ENCODE measurements at regions of chr3 and their contacts with region 1.

Region 1: GRCh38 chr3:71583566-71584449 is at the start of gene FOXP1:
- DNase-seq: peak; percentile 60 to 64
- H3K4me3 ChIP-seq: peak within 1 kb of the TSS; percentile 77
- H3K4me3 Mint-ChIP-seq: peak within 1 kb of the TSS; percentile 91
- H3K27ac Mint-ChIP-seq: peak within 1 kb of the TSS; percentile 90
- H3K4me1 ChIP-seq: peaks cover 12% of the 10 kb centered on the region
- H3K4me1 Mint-ChIP-seq: peaks cover 18% of the 10 kb centered on the region
- H3K27me3 ChIP-seq: no peaks in the 10 kb centered on the region
- H3K27me3 Mint-ChIP-seq: no peaks in the 10 kb centered on the region
- CTCF ChIP-seq: no peak
- total RNA-seq, gene FOXP1: 131 and 155 TPM in 2 replicates

Region 2: GRCh38 chr3:70899816-70900215 is 684.0 kb before region 1 on chr3:
- CTCF ChIA-PET with region 1: no interaction called
- POLR2A ChIA-PET with region 1: no interaction called
- intact Hi-C with region 1: no loop called
- DNase-seq: no peak
- H3K4me3 ChIP-seq: no peak overlapping the region
- H3K4me3 Mint-ChIP-seq: no peak overlapping the region
- H3K27ac Mint-ChIP-seq: no peak overlapping the region
- H3K4me1 ChIP-seq: no peaks in the 10 kb centered on the region
- H3K4me1 Mint-ChIP-seq: no peaks in the 10 kb centered on the region
- H3K27me3 ChIP-seq: no peaks in the 10 kb centered on the region
- H3K27me3 Mint-ChIP-seq: peaks cover 8% of the 10 kb centered on the region
- CTCF ChIP-seq: no peak

Region 3: GRCh38 chr3:71006810-71007785 is 576.7 kb before region 1 on chr3:
- CTCF ChIA-PET with region 1: no interaction called
- POLR2A ChIA-PET with region 1: no interaction called
- intact Hi-C with region 1: loop called (anchors 5 kb)
- DNase-seq: peak in 1 of 2 experiments; percentile 13
- H3K4me3 ChIP-seq: no peak overlapping the region
- H3K4me3 Mint-ChIP-seq: no peak overlapping the region
- H3K27ac Mint-ChIP-seq: no peak overlapping the region
- H3K4me1 ChIP-seq: peaks cover 15% of the 10 kb centered on the region
- H3K4me1 Mint-ChIP-seq: peaks cover 6% of the 10 kb centered on the region
- H3K27me3 ChIP-seq: no peaks in the 10 kb centered on the region
- H3K27me3 Mint-ChIP-seq: no peaks in the 10 kb centered on the region
- CTCF ChIP-seq: peak in 1 of 2 experiments; percentile 40

Region 4: DNA sequence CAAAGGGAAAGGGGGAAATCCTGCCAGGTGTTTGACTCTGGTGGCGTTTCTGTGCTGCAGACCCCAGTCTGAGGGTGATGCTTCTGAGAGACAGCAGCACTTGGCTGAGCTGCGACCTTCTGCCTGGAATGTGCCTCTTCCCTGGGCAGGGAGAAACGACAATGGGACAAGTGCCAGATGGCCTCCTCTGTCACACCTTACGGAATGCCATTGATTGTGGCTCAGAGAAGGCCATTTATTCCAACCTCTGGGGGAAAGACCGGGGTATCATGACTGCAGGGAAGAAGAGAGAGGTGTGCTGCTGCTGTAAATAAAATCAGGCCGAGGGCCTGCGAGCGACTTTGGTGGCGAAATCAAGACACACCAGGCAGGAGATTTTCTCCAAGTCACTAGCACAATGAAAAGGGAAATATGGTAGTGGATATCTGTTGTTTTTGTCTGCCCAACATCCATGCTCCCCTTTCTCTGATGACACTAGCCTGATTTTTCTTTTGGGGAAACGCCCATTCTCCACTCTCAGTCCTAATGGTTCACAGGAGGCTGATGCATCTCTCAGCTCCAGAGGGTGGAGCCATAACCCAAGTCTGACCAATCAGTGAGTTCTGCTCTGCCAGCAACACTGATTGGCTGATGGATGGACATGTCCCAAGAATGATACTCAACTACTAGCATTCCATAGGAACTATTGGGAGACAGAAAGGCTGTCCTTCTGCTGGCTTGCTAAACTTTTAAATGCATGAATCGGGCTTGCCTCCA is 336.4 kb before region 1 on chr3:
- CTCF ChIA-PET with region 1: no interaction called
- POLR2A ChIA-PET with region 1: no interaction called
- intact Hi-C with region 1: loop called (anchors 2 kb)
- DNase-seq: peak; percentile 75 to 88
- H3K4me3 ChIP-seq: no peak overlapping the region
- H3K4me3 Mint-ChIP-seq: peak overlapping the region; percentile 24
- H3K27ac Mint-ChIP-seq: peak overlapping the region; percentile 83
- H3K4me1 ChIP-seq: peaks cover 69% of the 10 kb centered on the region
- H3K4me1 Mint-ChIP-seq: peaks cover 57% of the 10 kb centered on the region
- H3K27me3 ChIP-seq: no peaks in the 10 kb centered on the region
- H3K27me3 Mint-ChIP-seq: no peaks in the 10 kb centered on the region
- CTCF ChIP-seq: no peak

Region 5: DNA sequence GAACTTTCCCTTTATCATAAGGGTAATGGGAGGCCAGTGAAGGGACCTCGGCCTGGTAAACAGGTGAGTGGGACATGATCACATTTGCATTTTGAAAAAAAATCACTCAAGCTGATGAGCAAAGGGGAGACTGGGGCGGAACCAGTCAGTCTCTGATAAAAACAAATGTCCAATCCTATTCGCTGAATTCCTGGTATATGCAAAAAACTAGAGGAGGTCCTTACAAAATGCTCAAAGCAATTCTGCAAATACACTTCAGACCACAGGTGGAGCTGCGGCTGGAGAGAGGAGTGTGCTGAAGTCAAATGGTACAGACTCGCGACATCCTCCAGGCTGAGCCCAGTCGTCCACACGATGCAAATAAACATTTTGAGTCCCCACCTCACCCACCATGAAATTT is 166.9 kb before region 1 on chr3:
- CTCF ChIA-PET with region 1: no interaction called
- POLR2A ChIA-PET with region 1: no interaction called
- intact Hi-C with region 1: loop called (anchors 1 kb)
- DNase-seq: peak; percentile 61 to 67
- H3K4me3 ChIP-seq: no peak overlapping the region
- H3K4me3 Mint-ChIP-seq: peak overlapping the region; percentile 63
- H3K27ac Mint-ChIP-seq: peak overlapping the region; percentile 96
- H3K4me1 ChIP-seq: peaks cover 38% of the 10 kb centered on the region
- H3K4me1 Mint-ChIP-seq: peaks cover 44% of the 10 kb centered on the region
- H3K27me3 ChIP-seq: no peaks in the 10 kb centered on the region
- H3K27me3 Mint-ChIP-seq: no peaks in the 10 kb centered on the region
- CTCF ChIP-seq: peak; percentile 35 to 39

Region 6: GRCh38 chr3:71548705-71549384 is 35.0 kb before region 1 on chr3:
- CTCF ChIA-PET with region 1: interaction called, 3 read pairs
- POLR2A ChIA-PET with region 1: no interaction called
- intact Hi-C with region 1: loop called (anchors 1 kb)
- DNase-seq: no peak
- H3K4me3 ChIP-seq: no peak overlapping the region
- H3K4me3 Mint-ChIP-seq: no peak overlapping the region
- H3K27ac Mint-ChIP-seq: peak overlapping the region; percentile 76
- H3K4me1 ChIP-seq: peaks cover 33% of the 10 kb centered on the region
- H3K4me1 Mint-ChIP-seq: peaks cover 14% of the 10 kb centered on the region
- H3K27me3 ChIP-seq: no peaks in the 10 kb centered on the region
- H3K27me3 Mint-ChIP-seq: no peaks in the 10 kb centered on the region
- CTCF ChIP-seq: no peak

Region 7: GRCh38 chr3:71659864-71660591 is 76.2 kb after region 1 on chr3:
- CTCF ChIA-PET with region 1: no interaction called
- POLR2A ChIA-PET with region 1: no interaction called
- intact Hi-C with region 1: no loop called
- DNase-seq: no peak
- H3K4me3 ChIP-seq: no peak overlapping the region
- H3K4me3 Mint-ChIP-seq: no peak overlapping the region
- H3K27ac Mint-ChIP-seq: no peak overlapping the region
- H3K4me1 ChIP-seq: no peaks in the 10 kb centered on the region
- H3K4me1 Mint-ChIP-seq: no peaks in the 10 kb centered on the region
- H3K27me3 ChIP-seq: no peaks in the 10 kb centered on the region
- H3K27me3 Mint-ChIP-seq: no peaks in the 10 kb centered on the region
- CTCF ChIP-seq: no peak